ENCODE measurements at regions of chr3 and their contacts with region 1.

Region 1: DNA sequence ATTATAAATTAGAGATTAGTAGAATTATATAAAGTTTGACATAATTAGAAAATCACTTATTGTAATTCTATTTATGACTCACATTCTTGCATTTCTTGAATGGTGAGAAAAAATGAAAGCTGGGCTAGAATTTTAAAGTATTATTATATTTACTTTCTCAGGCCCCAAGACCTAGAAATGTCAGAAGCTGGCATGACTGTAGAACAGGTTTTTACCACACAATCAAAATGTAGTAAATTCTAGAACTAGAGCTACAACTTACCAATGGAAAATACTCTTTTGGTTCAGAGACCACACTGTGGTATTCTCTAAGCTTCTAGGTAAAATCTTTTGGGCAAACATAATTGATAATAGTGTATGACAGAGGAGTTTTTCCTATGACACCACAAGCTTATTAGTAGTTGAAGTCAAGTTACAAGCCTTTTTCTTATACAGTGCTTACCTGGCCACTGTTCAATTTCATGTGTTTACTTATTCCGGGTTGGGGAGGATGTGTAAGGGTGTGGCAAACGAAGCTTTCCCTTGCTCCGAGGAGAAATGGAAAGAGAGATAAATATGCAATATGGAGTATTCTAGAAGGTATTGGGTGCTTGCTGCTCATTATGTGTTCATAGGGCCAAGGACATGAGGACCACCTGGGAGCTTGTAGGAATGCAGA is 322.4 kb upstream of the POU1F1 start:
- DNase-seq: no peak
- ATAC-seq: no peak
- H3K4me3 ChIP-seq: no peak overlapping the region
- H3K4me3 Mint-ChIP-seq: no peak overlapping the region
- H3K27ac ChIP-seq: no peak overlapping the region
- H3K27ac Mint-ChIP-seq: no peak overlapping the region
- H3K4me1 ChIP-seq: no peaks in the 10 kb centered on the region
- H3K4me1 Mint-ChIP-seq: no peaks in the 10 kb centered on the region
- H3K27me3 ChIP-seq: no peaks in the 10 kb centered on the region
- H3K27me3 Mint-ChIP-seq: no peaks in the 10 kb centered on the region
- CTCF ChIP-seq: no peak

Region 2: DNA sequence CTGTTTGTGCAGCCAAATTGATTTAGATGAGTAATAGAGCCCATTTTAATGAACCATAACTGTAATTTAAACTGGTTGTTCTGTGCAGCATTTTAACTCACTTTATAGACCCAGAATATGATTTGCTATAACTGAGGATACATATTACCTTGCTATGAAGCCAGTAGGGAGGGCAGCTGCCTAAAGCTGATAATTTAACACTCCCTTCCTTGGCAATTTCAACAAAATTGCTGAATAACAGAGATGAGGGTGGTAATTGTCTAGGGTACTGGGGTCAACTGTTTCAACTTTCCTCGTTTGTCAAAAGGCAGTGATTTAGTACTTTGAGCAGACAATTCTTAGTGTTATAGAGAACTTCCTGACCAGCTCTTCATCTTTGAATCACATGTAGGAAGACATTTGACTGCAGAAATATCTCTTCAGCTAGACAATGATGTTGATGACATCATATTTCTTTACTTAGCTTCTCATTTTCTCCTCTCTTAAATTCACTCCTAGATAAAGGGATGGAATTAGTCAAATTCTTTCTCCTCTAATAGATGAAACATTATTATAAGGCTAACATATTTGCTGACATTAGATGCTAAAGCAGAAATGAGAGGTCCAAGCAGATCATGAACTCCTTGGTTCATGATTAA is 17.4 kb before region 1 on chr3:
- CTCF ChIA-PET with region 1: no interaction called
- POLR2A ChIA-PET with region 1: no interaction called
- intact Hi-C with region 1: loop called (anchors 1 kb)
- DNase-seq: no peak
- ATAC-seq: no peak
- H3K4me3 ChIP-seq: no peak overlapping the region
- H3K4me3 Mint-ChIP-seq: no peak overlapping the region
- H3K27ac ChIP-seq: no peak overlapping the region
- H3K27ac Mint-ChIP-seq: no peak overlapping the region
- H3K4me1 ChIP-seq: no peaks in the 10 kb centered on the region
- H3K4me1 Mint-ChIP-seq: no peaks in the 10 kb centered on the region
- H3K27me3 ChIP-seq: no peaks in the 10 kb centered on the region
- H3K27me3 Mint-ChIP-seq: no peaks in the 10 kb centered on the region
- CTCF ChIP-seq: no peak

Region 3: DNA sequence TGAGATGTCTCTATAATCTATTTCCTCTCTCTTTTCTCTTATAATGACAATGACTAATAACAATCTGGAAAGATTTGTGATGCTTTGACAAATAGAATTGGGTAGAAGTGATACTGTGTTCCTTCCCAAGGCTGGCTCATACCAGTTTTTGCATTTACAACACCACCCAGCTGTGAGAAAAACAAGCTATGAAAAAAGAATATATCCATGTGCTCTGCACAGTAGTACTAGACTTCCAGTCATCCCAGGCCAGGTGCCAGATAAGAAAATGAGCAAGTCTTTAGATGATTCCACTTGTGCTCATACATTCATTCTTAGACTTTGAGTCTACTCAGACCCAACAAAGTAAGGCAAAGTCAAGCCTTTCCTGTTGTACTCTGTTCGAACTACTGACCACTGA is 27.8 kb after region 1 on chr3:
- CTCF ChIA-PET with region 1: no interaction called
- POLR2A ChIA-PET with region 1: no interaction called
- intact Hi-C with region 1: no loop called
- DNase-seq: no peak
- ATAC-seq: no peak
- H3K4me3 ChIP-seq: no peak overlapping the region
- H3K4me3 Mint-ChIP-seq: no peak overlapping the region
- H3K27ac ChIP-seq: no peak overlapping the region
- H3K27ac Mint-ChIP-seq: no peak overlapping the region
- H3K4me1 ChIP-seq: no peaks in the 10 kb centered on the region
- H3K4me1 Mint-ChIP-seq: no peaks in the 10 kb centered on the region
- H3K27me3 ChIP-seq: no peaks in the 10 kb centered on the region
- H3K27me3 Mint-ChIP-seq: no peaks in the 10 kb centered on the region
- CTCF ChIP-seq: no peak

Region 4: DNA sequence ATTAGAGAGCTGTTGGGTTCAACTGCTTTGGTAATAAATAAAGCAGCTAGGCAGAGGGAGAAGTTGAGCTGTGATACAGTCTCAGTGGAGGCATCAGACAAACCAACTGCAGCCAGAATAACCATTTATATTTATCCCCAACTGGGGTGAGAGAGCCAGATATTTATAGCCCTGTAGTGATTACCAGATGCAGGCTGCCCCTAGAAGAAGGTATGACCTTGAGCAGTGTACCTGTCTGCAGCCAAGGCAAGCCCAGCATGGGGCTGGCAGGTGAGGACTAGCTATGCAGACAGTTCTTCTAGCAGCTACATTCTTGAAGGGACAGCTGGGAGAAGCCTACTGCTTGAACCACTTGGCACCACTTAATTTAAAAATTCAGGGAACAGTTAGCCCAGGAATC is 1364.2 kb after region 1 on chr3:
- CTCF ChIA-PET with region 1: no interaction called
- POLR2A ChIA-PET with region 1: no interaction called
- intact Hi-C with region 1: no loop called
- DNase-seq: no peak
- ATAC-seq: no peak
- H3K4me3 ChIP-seq: no peak overlapping the region
- H3K4me3 Mint-ChIP-seq: no peak overlapping the region
- H3K27ac ChIP-seq: no peak overlapping the region
- H3K27ac Mint-ChIP-seq: no peak overlapping the region
- H3K4me1 ChIP-seq: no peaks in the 10 kb centered on the region
- H3K4me1 Mint-ChIP-seq: no peaks in the 10 kb centered on the region
- H3K27me3 ChIP-seq: no peaks in the 10 kb centered on the region
- H3K27me3 Mint-ChIP-seq: no peaks in the 10 kb centered on the region
- CTCF ChIP-seq: no peak

Measured in B cell (primary cell).